ENCODE measurements at regions of chr2 and their contacts with region 1.

Region 1: GRCh38 chr2:70510313-70510712 is 43.3 kb downstream of the TGFA start:
- DNase-seq: no peak
- H3K4me3 Mint-ChIP-seq: no peak overlapping the region
- H3K27ac Mint-ChIP-seq: no peak overlapping the region
- H3K4me1 Mint-ChIP-seq: no peaks in the 10 kb centered on the region
- H3K27me3 Mint-ChIP-seq: no peaks in the 10 kb centered on the region

Region 2: DNA sequence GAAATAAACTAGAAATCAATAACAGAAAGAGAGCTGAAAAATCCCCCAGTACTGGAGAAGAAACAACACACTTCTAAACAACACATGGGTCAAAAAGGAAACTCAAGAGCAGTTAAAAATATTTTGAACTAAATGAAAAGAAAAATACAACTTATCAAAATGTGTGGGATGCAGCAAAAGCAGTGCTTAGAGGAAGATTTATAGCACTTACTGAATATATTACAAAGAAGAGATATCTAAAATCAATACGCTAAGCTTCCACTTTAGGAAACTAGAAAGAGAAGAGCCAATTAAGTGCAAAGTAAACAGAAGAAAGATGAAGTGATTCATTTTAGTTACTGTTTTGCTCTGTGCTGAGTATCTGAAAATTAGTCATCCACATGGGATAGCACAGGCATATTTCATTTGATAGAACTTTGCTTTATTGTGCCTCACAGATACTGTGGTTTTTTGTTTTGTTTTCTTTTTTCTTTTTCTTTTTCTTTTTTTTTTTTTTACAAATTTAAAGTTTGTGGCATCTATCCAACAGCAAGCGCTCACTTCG is 26.3 kb after region 1 on chr2:
- CTCF ChIA-PET with region 1: no interaction called
- intact Hi-C with region 1: loop called (anchors 1 kb)
- DNase-seq: no peak
- H3K4me3 Mint-ChIP-seq: no peak overlapping the region
- H3K27ac Mint-ChIP-seq: no peak overlapping the region
- H3K4me1 Mint-ChIP-seq: peaks cover 2% of the 10 kb centered on the region
- H3K27me3 Mint-ChIP-seq: no peaks in the 10 kb centered on the region

Measured in activated naive CD4-positive, alpha-beta T cell treated with anti-CD3 and anti-CD28 coated beads for 36 hours (primary cell).